CD4-positive, alpha-beta memory T cell (primary cell): ENCODE measurements at regions of chr11 and their contacts with region 1.

Region 1: GRCh38 chr11:31107062-31107461 is 262.5 kb downstream of the DCDC1 start:
- DNase-seq: peak in 4 of 5 donors; percentile 8 to 34 (median 24)
- H3K4me3 ChIP-seq: no peak overlapping the region
- H3K4me3 Mint-ChIP-seq: no peak overlapping the region
- H3K27ac ChIP-seq: no peak overlapping the region
- H3K27ac Mint-ChIP-seq: peak overlapping the region in 1 of 7 donors; percentile 63
- H3K4me1 ChIP-seq: no peaks in the 10 kb centered on the region
- H3K4me1 Mint-ChIP-seq: peaks cover 0 to 2% (median 0%) of the 10 kb centered on the region in 4 donors
- H3K27me3 ChIP-seq: no peaks in the 10 kb centered on the region
- H3K27me3 Mint-ChIP-seq: peaks cover 0 to 4% of the 10 kb centered on the region in 2 donors

Region 2: GRCh38 chr11:30893318-30893717 is 213.7 kb before region 1 on chr11:
- CTCF ChIA-PET with region 1: no interaction called
- POLR2A ChIA-PET with region 1: no interaction called
- intact Hi-C with region 1: no loop called
- DNase-seq: no peak
- H3K4me3 ChIP-seq: no peak overlapping the region
- H3K4me3 Mint-ChIP-seq: no peak overlapping the region
- H3K27ac ChIP-seq: no peak overlapping the region
- H3K27ac Mint-ChIP-seq: no peak overlapping the region
- H3K4me1 ChIP-seq: no peaks in the 10 kb centered on the region
- H3K4me1 Mint-ChIP-seq: no peaks in the 10 kb centered on the region
- H3K27me3 ChIP-seq: no peaks in the 10 kb centered on the region
- H3K27me3 Mint-ChIP-seq: no peaks in the 10 kb centered on the region

Region 3: GRCh38 chr11:30936491-30936890 is 170.6 kb before region 1 on chr11:
- CTCF ChIA-PET with region 1: no interaction called
- POLR2A ChIA-PET with region 1: no interaction called
- intact Hi-C with region 1: no loop called
- DNase-seq: no peak
- H3K4me3 ChIP-seq: no peak overlapping the region
- H3K4me3 Mint-ChIP-seq: no peak overlapping the region
- H3K27ac ChIP-seq: no peak overlapping the region
- H3K27ac Mint-ChIP-seq: no peak overlapping the region
- H3K4me1 ChIP-seq: no peaks in the 10 kb centered on the region
- H3K4me1 Mint-ChIP-seq: no peaks in the 10 kb centered on the region
- H3K27me3 ChIP-seq: no peaks in the 10 kb centered on the region
- H3K27me3 Mint-ChIP-seq: no peaks in the 10 kb centered on the region

Region 4: GRCh38 chr11:31295308-31295707 is 188.2 kb after region 1 on chr11:
- CTCF ChIA-PET with region 1: no interaction called
- POLR2A ChIA-PET with region 1: no interaction called
- intact Hi-C with region 1: no loop called
- DNase-seq: no peak
- H3K4me3 ChIP-seq: no peak overlapping the region
- H3K4me3 Mint-ChIP-seq: no peak overlapping the region
- H3K27ac ChIP-seq: no peak overlapping the region
- H3K27ac Mint-ChIP-seq: no peak overlapping the region
- H3K4me1 ChIP-seq: no peaks in the 10 kb centered on the region
- H3K4me1 Mint-ChIP-seq: peaks cover 0 to 2% (median 0%) of the 10 kb centered on the region in 4 donors
- H3K27me3 ChIP-seq: no peaks in the 10 kb centered on the region
- H3K27me3 Mint-ChIP-seq: peaks cover 0 to 4% of the 10 kb centered on the region in 2 donors

Region 5: GRCh38 chr11:31958076-31958735 is 851.1 kb after region 1 on chr11:
- CTCF ChIA-PET with region 1: interaction called, 12 read pairs
- POLR2A ChIA-PET with region 1: no interaction called
- intact Hi-C with region 1: no loop called
- DNase-seq: peak in 4 of 5 donors; percentile 33 to 40 (median 37)
- H3K4me3 ChIP-seq: no peak overlapping the region
- H3K4me3 Mint-ChIP-seq: peak overlapping the region in 1 of 8 donors; percentile 37
- H3K27ac ChIP-seq: no peak overlapping the region
- H3K27ac Mint-ChIP-seq: no peak overlapping the region
- H3K4me1 ChIP-seq: no peaks in the 10 kb centered on the region
- H3K4me1 Mint-ChIP-seq: peaks cover 0 to 4% (median 0%) of the 10 kb centered on the region in 4 donors
- H3K27me3 ChIP-seq: no peaks in the 10 kb centered on the region
- H3K27me3 Mint-ChIP-seq: peaks cover 0 to 4% of the 10 kb centered on the region in 2 donors

Region 6: GRCh38 chr11:32006799-32007388 is 899.8 kb after region 1 on chr11:
- CTCF ChIA-PET with region 1: interaction called, 7 read pairs
- POLR2A ChIA-PET with region 1: no interaction called
- intact Hi-C with region 1: loop called (anchors 2 kb)
- DNase-seq: peak in 4 of 5 donors; percentile 7 to 31 (median 26)
- H3K4me3 ChIP-seq: no peak overlapping the region
- H3K4me3 Mint-ChIP-seq: peak overlapping the region in 1 of 8 donors; percentile 15
- H3K27ac ChIP-seq: no peak overlapping the region
- H3K27ac Mint-ChIP-seq: no peak overlapping the region
- H3K4me1 ChIP-seq: no peaks in the 10 kb centered on the region
- H3K4me1 Mint-ChIP-seq: peaks cover 0 to 3% (median under 1%) of the 10 kb centered on the region in 4 donors
- H3K27me3 ChIP-seq: peaks cover 3% of the 10 kb centered on the region
- H3K27me3 Mint-ChIP-seq: peaks cover 19 to 37% of the 10 kb centered on the region in 2 donors

Region 7: GRCh38 chr11:32052218-32052617 is 945.2 kb after region 1 on chr11:
- CTCF ChIA-PET with region 1: no interaction called
- POLR2A ChIA-PET with region 1: no interaction called
- intact Hi-C with region 1: loop called (anchors 5 kb)
- DNase-seq: peak; percentile 25 to 48 (median 41)
- H3K4me3 ChIP-seq: no peak overlapping the region
- H3K4me3 Mint-ChIP-seq: no peak overlapping the region
- H3K27ac ChIP-seq: no peak overlapping the region
- H3K27ac Mint-ChIP-seq: no peak overlapping the region
- H3K4me1 ChIP-seq: no peaks in the 10 kb centered on the region
- H3K4me1 Mint-ChIP-seq: no peaks in the 10 kb centered on the region
- H3K27me3 ChIP-seq: no peaks in the 10 kb centered on the region
- H3K27me3 Mint-ChIP-seq: peaks cover 17 to 26% of the 10 kb centered on the region in 2 donors